B cell (primary cell): ENCODE measurements at regions of chr12 and their contacts with region 1.

Region 1: DNA sequence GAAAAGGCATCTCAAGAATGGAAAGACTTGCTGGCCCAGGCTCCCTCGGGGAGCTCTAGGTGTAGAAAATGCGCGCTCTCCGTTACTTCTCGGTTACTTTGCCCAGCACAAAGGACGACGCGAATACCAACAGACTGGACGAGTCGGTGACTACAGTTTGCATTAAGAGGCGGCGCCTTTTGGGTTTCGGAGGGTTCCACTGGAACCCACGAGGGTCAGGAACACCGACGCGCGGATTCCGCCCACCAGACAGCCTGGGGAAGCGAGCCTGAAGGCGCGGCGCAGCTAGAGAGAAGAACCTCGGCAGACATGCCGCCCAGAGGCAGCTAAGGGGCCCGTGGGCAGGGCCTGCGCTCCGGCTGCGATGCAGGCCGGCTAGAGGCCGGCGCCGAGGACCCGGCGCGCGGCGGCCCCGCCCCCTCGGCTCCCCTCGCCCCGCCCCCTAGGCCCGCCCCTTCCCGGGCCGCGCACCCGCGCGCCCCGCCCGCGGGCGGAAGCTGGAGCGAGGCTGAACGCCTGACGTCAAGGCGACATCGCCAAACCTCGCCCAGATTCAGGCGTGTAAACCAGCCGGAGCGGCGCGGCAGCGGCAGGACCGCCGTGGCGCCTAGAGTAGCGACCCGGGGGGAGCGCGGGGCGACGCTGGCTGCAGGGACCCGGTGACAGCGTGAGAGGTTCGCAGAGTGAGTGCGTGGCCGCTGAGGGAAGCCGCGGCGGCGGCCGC is at the start of gene RAP1B:
- DNase-seq: peak; percentile 93
- ATAC-seq: peak; percentile 86
- H3K4me3 ChIP-seq: peak within 1 kb of the TSS; percentile 61 to 99 (median 90)
- H3K4me3 Mint-ChIP-seq: peak within 1 kb of the TSS; percentile 98
- H3K27ac ChIP-seq: peak within 1 kb of the TSS; percentile 91 to 94
- H3K27ac Mint-ChIP-seq: peak within 1 kb of the TSS; percentile 99
- H3K4me1 ChIP-seq: peaks cover 35 to 40% of the 10 kb centered on the region in 2 donors
- H3K4me1 Mint-ChIP-seq: peaks cover 45% of the 10 kb centered on the region
- H3K27me3 ChIP-seq: no peaks in the 10 kb centered on the region
- H3K27me3 Mint-ChIP-seq: no peaks in the 10 kb centered on the region
- CTCF ChIP-seq: no peak
- total RNA-seq, gene RAP1B: 158 and 159 TPM in 2 replicates

Region 2: DNA sequence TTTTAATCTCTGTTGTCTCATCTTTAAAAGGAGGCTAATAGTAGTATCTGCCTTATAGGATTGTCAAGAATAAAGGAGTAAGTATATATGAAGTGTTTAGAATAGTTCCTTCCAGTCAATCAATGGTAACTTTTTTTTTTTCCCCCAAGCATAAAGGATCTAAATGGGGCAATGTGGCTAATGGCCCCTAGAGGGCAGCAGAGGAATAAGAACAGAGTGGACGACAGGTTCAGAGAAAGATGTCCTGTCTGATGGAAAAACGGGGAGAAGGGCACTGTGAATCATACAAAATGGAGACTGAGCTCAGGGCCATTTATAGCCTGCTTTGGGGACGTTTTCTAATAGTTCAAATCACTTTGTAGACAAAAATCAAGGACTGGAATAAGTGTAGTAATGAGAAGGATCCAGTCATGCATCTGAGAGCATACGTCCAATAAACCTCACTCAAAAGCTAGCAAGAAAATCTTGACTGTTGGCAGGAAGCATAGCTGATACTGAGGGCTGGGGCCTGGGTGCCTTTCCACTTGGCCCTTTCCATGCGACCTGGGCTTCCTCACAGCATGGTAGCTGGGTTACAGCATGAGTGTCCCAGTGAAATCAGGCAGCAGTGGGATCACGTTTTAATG is 570.0 kb before region 1 on chr12:
- CTCF ChIA-PET with region 1: no interaction called
- POLR2A ChIA-PET with region 1: no interaction called
- intact Hi-C with region 1: no loop called
- DNase-seq: peak; percentile 79
- ATAC-seq: peak; percentile 67
- H3K4me3 ChIP-seq: no peak overlapping the region
- H3K4me3 Mint-ChIP-seq: peak overlapping the region; percentile 1
- H3K27ac ChIP-seq: no peak overlapping the region
- H3K27ac Mint-ChIP-seq: no peak overlapping the region
- H3K4me1 ChIP-seq: peaks cover 11 to 15% of the 10 kb centered on the region in 2 donors
- H3K4me1 Mint-ChIP-seq: peaks cover 20% of the 10 kb centered on the region
- H3K27me3 ChIP-seq: no peaks in the 10 kb centered on the region
- H3K27me3 Mint-ChIP-seq: no peaks in the 10 kb centered on the region
- CTCF ChIP-seq: peak; percentile 99

Region 3: GRCh38 chr12:68331869-68332727 is 278.4 kb before region 1 on chr12 and contains the start of gene MDM1:
- CTCF ChIA-PET with region 1: no interaction called
- POLR2A ChIA-PET with region 1: interaction called, 5 read pairs
- intact Hi-C with region 1: loop called (anchors 1 kb)
- DNase-seq: peak; percentile 97
- ATAC-seq: peak; percentile 97
- H3K4me3 ChIP-seq: peak within 1 kb of the TSS; percentile 79 to 85 (median 82)
- H3K4me3 Mint-ChIP-seq: peak within 1 kb of the TSS; percentile 94
- H3K27ac ChIP-seq: peak within 1 kb of the TSS; percentile 55 to 78
- H3K27ac Mint-ChIP-seq: peak within 1 kb of the TSS; percentile 90
- H3K4me1 ChIP-seq: peaks cover 12 to 14% of the 10 kb centered on the region in 2 donors
- H3K4me1 Mint-ChIP-seq: peaks cover 40% of the 10 kb centered on the region
- H3K27me3 ChIP-seq: no peaks in the 10 kb centered on the region
- H3K27me3 Mint-ChIP-seq: no peaks in the 10 kb centered on the region
- CTCF ChIP-seq: no peak
- total RNA-seq, gene MDM1: 38.3 and 38.9 TPM in 2 replicates

Region 4: GRCh38 chr12:68587448-68587873 is 23.1 kb before region 1 on chr12:
- CTCF ChIA-PET with region 1: interaction called, 4 read pairs
- POLR2A ChIA-PET with region 1: interaction called, 15 read pairs
- intact Hi-C with region 1: loop called (anchors 1 kb)
- DNase-seq: peak; percentile 73
- ATAC-seq: peak; percentile 80
- H3K4me3 ChIP-seq: no peak overlapping the region
- H3K4me3 Mint-ChIP-seq: peak overlapping the region; percentile 65
- H3K27ac ChIP-seq: peak overlapping the region in 1 of 2 donors; percentile 41
- H3K27ac Mint-ChIP-seq: peak overlapping the region; percentile 88
- H3K4me1 ChIP-seq: peaks cover 29% of the 10 kb centered on the region in 2 donors
- H3K4me1 Mint-ChIP-seq: peaks cover 34% of the 10 kb centered on the region
- H3K27me3 ChIP-seq: no peaks in the 10 kb centered on the region
- H3K27me3 Mint-ChIP-seq: no peaks in the 10 kb centered on the region
- CTCF ChIP-seq: no peak

Region 5: DNA sequence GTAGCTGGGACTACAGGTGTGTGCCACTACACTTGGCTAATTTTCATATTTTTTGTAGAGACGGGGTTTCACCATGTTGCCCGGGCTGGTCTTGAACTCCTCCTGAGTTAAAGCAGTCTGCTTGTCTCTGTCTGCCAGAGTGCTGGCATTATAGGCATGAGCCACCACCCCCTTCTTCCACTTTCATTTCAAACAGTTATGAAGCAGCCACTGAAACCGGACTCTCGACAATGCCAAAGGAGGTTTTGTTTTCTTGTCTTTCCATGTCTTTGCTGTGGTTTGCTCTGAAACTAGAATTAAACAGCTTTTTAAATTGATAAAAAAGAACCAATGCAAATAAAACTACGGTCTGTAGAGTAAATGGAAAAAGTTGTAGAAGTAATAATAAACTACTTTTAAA is 30.6 kb after region 1 on chr12:
- CTCF ChIA-PET with region 1: interaction called, 4 read pairs
- POLR2A ChIA-PET with region 1: interaction called, 5 read pairs
- intact Hi-C with region 1: loop called (anchors 2 kb)
- DNase-seq: peak; percentile 62
- ATAC-seq: peak; percentile 79
- H3K4me3 ChIP-seq: peak overlapping the region in 1 of 5 experiments; percentile 18
- H3K4me3 Mint-ChIP-seq: peak overlapping the region; percentile 72
- H3K27ac ChIP-seq: peak overlapping the region in 1 of 2 donors; percentile 77
- H3K27ac Mint-ChIP-seq: peak overlapping the region; percentile 78
- H3K4me1 ChIP-seq: peaks cover 41 to 53% of the 10 kb centered on the region in 2 donors
- H3K4me1 Mint-ChIP-seq: peaks cover 72% of the 10 kb centered on the region
- H3K27me3 ChIP-seq: no peaks in the 10 kb centered on the region
- H3K27me3 Mint-ChIP-seq: no peaks in the 10 kb centered on the region
- CTCF ChIP-seq: no peak

Region 6: DNA sequence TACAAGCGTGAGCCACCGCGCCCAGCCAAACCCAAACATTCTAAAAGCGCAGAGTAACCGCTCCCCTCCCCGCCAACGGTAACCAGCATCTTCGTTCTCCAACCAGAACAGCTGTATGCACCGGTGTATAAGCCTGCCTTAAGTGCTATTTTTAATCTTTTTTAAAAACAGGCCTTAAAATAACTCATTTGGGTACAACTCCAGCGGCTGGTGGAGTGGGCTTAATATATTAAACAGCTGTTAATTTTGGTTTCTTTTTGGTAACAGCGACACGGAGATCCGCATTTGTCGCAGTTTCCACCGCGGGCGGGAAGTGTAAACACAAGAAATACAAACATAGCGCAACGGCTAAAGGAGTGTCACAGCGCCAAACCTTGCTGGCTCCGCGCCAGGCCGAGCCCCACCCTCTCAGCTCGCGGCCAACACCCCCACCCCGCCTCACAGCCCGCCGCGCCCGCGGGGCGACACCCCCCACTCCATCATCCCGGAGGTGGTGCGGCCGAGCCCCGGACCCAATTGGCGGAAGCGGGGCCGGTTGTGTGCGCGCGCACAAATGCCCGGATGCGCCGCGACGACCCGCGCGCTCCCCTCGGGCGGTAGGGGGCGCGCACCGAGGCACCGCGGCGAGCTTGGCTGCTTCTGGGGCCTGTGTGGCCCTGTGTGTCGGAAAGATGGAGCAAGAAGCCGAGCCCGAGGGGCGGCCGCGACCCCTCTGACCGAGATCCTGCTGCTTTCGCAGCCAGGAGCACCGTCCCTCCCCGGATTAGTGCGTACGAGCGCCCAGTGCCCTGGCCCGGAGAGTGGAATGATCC is 197.2 kb after region 1 on chr12 and contains the start of gene MDM2:
- CTCF ChIA-PET with region 1: interaction called, 3 read pairs
- POLR2A ChIA-PET with region 1: interaction called, 13 read pairs
- intact Hi-C with region 1: no loop called
- DNase-seq: peak; percentile 98
- ATAC-seq: peak; percentile 90
- H3K4me3 ChIP-seq: peak within 1 kb of the TSS; percentile 65 to 95 (median 84)
- H3K4me3 Mint-ChIP-seq: peak within 1 kb of the TSS; percentile 97
- H3K27ac ChIP-seq: peak within 1 kb of the TSS; percentile 92 to 95
- H3K27ac Mint-ChIP-seq: peak within 1 kb of the TSS; percentile 99
- H3K4me1 ChIP-seq: peaks cover 11% of the 10 kb centered on the region in 2 donors
- H3K4me1 Mint-ChIP-seq: peaks cover 17% of the 10 kb centered on the region
- H3K27me3 ChIP-seq: no peaks in the 10 kb centered on the region
- H3K27me3 Mint-ChIP-seq: no peaks in the 10 kb centered on the region
- CTCF ChIP-seq: peak; percentile 76
- total RNA-seq, gene MDM2: 78.7 and 87.0 TPM in 2 replicates